ENCODE measurements at regions of chr1 and their contacts with region 1.

Region 1: GRCh38 chr1:52056163-52056936 is at the start of gene BTF3L4:
- DNase-seq: peak; percentile 90

Region 2: DNA sequence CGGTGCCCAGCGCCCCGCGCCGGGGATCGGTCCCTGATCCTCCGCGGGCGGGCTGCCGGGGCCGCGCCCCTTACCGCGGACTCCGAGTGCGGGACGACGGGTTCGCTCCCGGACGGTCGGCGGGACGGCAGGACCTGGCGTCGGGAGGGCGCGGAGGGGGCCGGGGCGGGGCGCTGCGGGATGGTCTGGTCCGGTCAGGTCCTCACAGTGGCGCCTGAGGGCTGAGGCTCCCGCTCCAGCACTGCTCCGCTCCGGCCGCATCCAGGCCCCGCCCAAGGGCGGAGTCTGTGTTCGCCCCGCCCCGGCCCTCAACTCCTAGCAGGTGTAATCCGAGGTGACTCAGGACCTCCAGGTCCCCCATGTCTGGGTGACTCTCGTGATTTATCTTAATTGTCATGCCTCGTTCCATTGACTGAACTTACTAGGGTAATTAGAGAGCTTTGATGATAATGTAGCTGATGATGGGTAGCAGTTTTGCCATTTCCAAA is 65.8 kb before region 1 on chr1 and contains the start of gene RAB3B:
- CTCF ChIA-PET with region 1: no interaction called
- POLR2A ChIA-PET with region 1: no interaction called
- DNase-seq: peak; percentile 94

Region 3: GRCh38 chr1:52033190-52034049 is 22.9 kb before region 1 on chr1 and contains the start of gene KTI12:
- CTCF ChIA-PET with region 1: no interaction called
- POLR2A ChIA-PET with region 1: interaction called, 64 read pairs
- DNase-seq: peak; percentile 88

Region 4: GRCh38 chr1:52041551-52042185 is 14.7 kb before region 1 on chr1:
- CTCF ChIA-PET with region 1: no interaction called
- POLR2A ChIA-PET with region 1: interaction called, 13 read pairs
- DNase-seq: no peak

Region 5: DNA sequence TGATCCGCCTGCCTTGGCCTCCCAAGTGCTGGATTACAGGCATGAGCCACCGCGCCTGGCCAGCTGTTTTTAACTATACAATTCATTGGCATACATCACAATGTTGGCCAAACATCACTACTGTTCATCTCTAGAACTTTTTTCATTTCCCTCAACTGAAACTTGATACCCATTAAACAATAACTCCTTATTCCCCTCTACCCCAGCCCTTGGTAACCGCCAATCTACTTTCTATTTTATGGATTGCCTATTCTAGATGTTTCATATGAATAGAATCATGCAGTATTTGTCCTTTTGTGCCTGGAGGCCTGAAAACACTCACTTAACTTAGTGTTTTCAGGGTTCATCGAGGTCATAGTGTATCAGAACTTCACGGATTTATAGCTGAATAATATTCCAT is 15.9 kb after region 1 on chr1:
- CTCF ChIA-PET with region 1: interaction called, 3 read pairs
- POLR2A ChIA-PET with region 1: interaction called, 10 read pairs
- DNase-seq: no peak

Region 6: DNA sequence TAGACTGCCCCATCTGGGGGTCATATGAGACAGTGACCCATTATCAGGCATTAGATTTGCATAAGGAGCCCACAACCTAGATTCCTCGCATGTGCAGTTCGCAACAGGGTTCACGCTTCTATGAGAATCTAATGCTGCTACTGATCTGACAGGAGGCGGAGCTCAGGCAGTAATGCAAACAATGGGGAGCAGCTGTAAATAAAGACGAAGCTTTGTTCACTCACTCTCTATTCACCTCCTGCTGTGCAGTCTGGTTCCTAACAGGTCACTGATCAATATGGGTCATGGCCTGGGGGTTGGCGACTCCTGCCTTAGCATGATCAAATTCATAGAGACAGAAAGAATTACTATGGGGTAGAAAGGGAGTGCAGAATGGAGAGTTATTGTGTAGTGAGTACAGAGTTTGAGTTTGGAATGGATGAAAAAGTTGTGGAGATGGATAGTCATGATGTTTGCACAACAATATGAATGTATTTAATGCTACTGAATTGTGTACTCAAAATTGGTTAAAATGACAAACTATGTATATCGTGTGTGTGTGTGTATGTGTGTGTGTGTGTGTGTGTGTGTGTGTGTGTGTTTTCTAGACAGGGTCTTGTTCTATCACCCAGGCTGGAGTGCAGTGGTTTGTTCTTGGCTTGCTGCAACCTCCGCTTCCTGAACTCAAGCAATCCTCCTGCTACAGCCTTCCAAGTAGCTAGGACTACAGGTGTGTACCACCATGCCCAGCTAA is 42.0 kb after region 1 on chr1:
- CTCF ChIA-PET with region 1: no interaction called
- POLR2A ChIA-PET with region 1: no interaction called
- DNase-seq: no peak